IMR-90 (cell line): ENCODE measurements at regions of chr2 and their contacts with region 1.

Region 1: DNA sequence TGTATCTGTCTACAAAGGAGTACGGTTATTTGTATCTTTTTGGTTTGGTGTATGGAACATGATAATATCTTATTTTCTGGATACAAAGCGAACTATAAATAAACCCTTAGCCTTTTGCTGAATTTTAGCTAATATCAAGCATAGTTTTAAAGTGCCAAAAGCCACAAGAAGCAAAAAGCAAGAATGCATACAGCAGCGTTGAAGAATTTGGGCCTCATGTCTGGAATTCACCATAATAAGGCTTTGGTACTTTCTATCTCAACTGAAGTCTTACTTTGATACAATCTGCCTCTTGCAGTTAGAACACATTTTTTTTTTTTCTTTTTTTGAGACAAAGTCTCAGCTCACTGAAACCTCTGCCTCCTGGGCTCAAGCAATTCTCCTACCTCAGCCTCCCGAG is 151.5 kb downstream of the ERBB4 start:
- DNase-seq: no peak
- ATAC-seq: no peak
- H3K4me3 ChIP-seq: no peak overlapping the region
- H3K27ac ChIP-seq: no peak overlapping the region
- H3K4me1 ChIP-seq: no peaks in the 10 kb centered on the region
- H3K27me3 ChIP-seq: no peaks in the 10 kb centered on the region
- CTCF ChIP-seq: no peak
- POLR2A ChIP-seq: no peak
- RAD21 ChIP-seq: no peak

Region 2: GRCh38 chr2:212346865-212347264 is 40.3 kb before region 1 on chr2:
- CTCF ChIA-PET with region 1: no interaction called
- POLR2A ChIA-PET with region 1: no interaction called
- dilution Hi-C with region 1: no loop called
- in situ Hi-C with region 1: no loop called
- intact Hi-C with region 1: loop called (anchors 1 kb)
- DNase-seq: no peak
- ATAC-seq: no peak
- H3K4me3 ChIP-seq: no peak overlapping the region
- H3K27ac ChIP-seq: no peak overlapping the region
- H3K4me1 ChIP-seq: no peaks in the 10 kb centered on the region
- H3K27me3 ChIP-seq: no peaks in the 10 kb centered on the region
- CTCF ChIP-seq: no peak
- POLR2A ChIP-seq: no peak
- RAD21 ChIP-seq: no peak